ENCODE measurements at regions of chr3 and their contacts with region 1.

Region 1: GRCh38 chr3:150703299-150704134 is at the start of gene ERICH6:
- DNase-seq: peak; percentile 92 to 93
- ATAC-seq: peak; percentile 98 to 100 (median 99)
- H3K4me3 ChIP-seq: peak within 1 kb of the TSS; percentile 56 to 85 (median 70)
- H3K27ac ChIP-seq: peak within 1 kb of the TSS; percentile 35 to 91 (median 77)
- H3K4me1 ChIP-seq: peaks cover 0 to 17% (median 9%) of the 10 kb centered on the region in 9 donors
- H3K27me3 ChIP-seq: no peaks in the 10 kb centered on the region
- CTCF ChIP-seq: peak in 4 of 9 donors; percentile 12 to 26 (median 22)
- total RNA-seq, gene ERICH6: 0.20 to 0.56 TPM in 2 of 10 donors, not detected in the others

Region 2: DNA sequence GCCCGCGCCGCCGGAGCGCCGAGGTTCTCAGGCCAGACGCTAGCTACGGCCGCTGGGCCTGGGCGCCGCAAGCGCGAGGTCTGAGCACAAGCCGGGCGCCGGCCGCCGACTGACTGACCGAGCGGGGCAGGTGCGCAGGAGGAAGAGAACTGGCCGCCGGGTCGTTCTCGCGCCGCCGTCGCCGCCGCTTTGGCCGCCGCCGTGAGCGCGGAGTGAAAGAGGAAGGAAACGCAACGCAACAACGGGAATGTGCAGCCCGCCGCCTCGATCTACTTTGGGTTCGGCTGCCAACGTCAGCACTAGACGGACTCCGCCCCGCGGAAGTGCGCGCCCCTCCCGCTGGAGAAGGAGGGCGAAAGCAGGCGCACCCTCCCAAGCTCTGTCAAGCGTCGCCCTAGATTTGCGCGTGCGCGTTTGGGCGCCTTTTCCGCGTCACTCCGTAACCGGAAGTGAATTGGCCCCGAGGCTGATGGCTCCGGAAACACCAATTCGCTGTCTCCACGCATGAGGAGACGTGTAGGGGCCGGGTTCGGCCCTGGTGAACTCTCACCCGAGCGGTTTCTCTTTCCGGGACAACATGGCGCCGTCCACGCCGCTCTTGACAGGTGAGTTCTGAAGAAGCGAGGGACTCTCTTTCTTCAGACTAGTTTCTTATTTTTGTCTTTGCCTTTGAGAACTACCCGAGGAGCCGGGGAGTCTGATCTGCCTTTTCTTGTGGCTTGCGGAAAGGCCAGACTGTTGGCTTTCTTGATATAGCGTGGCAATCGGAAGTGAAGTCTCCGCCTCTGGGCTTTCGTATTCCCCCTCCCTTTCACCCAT is 157.1 kb before region 1 on chr3 and contains the starts of genes EIF2A and SERP1:
- intact Hi-C with region 1: loop called in 3 of 10 experiments (anchors 5 kb)
- DNase-seq: peak; percentile 98 to 99
- ATAC-seq: peak; percentile 97 to 99 (median 98)
- H3K4me3 ChIP-seq: peak within 1 kb of the TSS; percentile 80 to 92 (median 88)
- H3K27ac ChIP-seq: peak within 1 kb of the TSS; percentile 92 to 99 (median 99)
- H3K4me1 ChIP-seq: peaks cover 3 to 52% (median 33%) of the 10 kb centered on the region in 9 donors
- H3K27me3 ChIP-seq: no peaks in the 10 kb centered on the region
- CTCF ChIP-seq: no peak
- total RNA-seq, gene EIF2A: 67.5 to 86.5 (median 76.2) TPM
- total RNA-seq, gene SERP1: 17.5 to 33.7 (median 21.9) TPM

Region 3: DNA sequence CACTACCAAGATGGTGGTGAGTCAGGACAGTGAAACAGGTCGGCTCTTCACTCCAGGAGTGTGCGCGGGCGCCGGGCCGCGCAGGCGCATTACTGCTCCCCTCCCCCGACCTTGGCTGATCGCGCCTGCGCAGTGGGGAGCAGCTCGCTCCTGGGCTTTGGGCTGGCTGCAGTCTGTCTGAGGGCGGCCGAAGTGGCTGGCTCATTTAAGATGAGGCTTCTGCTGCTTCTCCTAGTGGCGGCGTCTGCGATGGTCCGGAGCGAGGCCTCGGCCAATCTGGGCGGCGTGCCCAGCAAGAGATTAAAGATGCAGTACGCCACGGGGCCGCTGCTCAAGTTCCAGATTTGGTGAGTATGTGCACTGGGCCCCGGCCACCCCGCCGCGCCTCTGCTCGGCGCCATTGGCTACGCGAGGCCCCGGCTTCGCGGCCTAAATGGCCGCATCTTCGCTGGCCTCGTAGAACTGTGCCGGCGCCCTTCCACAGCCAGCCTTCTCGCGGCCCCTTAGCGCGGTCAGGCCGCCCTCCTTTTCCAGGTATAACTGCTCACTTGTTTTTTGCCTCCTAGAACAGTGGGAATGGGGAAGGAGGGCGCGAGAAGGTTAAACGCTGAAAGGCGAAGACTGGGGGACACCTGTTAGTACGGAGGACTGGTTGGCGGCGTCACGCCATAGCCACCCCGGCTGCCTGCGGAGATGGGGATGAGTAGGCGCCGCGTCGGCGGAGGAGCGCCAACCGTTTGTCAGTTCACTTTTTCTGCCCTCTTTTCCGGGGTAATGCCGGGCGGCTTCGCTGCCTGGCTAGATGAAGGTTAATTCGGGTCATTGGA is 100.2 kb before region 1 on chr3 and contains the start of gene SELENOT:
- intact Hi-C with region 1: loop called in 5 of 10 experiments (anchors 5 to 10 kb)
- DNase-seq: peak; percentile 94 to 96
- ATAC-seq: peak; percentile 95 to 99 (median 98)
- H3K4me3 ChIP-seq: peak within 1 kb of the TSS; percentile 45 to 91 (median 80)
- H3K27ac ChIP-seq: peak within 1 kb of the TSS; percentile 92 to 99 (median 96)
- H3K4me1 ChIP-seq: peaks cover 0 to 69% (median 43%) of the 10 kb centered on the region in 9 donors
- H3K27me3 ChIP-seq: no peaks in the 10 kb centered on the region
- CTCF ChIP-seq: peak in 5 of 9 donors; percentile 30 to 51 (median 45)
- total RNA-seq, gene SELENOT: 63.8 to 88.2 (median 76.1) TPM

Region 4: DNA sequence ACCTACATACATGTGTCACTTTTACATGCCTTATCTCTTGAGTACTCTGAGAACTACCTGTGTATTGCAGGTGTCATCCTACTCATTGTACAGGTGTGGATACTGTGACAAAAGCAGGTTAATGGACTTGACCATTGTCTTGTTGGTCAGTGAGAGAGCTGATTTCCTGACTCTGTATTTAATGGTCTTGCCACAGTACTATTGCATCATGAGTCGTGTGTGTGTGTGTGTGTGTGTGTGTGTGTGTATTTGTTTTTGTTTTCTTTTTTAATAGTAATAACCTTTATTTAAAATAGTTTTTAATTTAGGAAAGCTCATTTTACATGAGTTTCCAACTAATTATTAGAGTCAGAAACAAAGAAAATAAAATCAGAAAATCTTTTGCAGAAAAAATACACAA is 92.7 kb before region 1 on chr3:
- intact Hi-C with region 1: loop called in 4 of 10 experiments (anchors 10 kb)
- DNase-seq: no peak
- ATAC-seq: peak in 1 of 8 donors; percentile 35
- H3K4me3 ChIP-seq: no peak overlapping the region
- H3K27ac ChIP-seq: no peak overlapping the region
- H3K4me1 ChIP-seq: peaks cover 0 to 66% (median 49%) of the 10 kb centered on the region in 9 donors
- H3K27me3 ChIP-seq: no peaks in the 10 kb centered on the region
- CTCF ChIP-seq: no peak